Naive thymus-derived CD4-positive, alpha-beta T cell (primary cell): ENCODE measurements at regions of chr14 and their contacts with region 1.

Region 1: GRCh38 chr14:80850197-80850814 is 91.2 kb downstream of the CEP128 start:
- DNase-seq: peak in 4 of 9 donors; percentile 1 to 5 (median 4)
- ATAC-seq: no peak
- H3K4me3 ChIP-seq: no peak overlapping the region
- H3K4me3 Mint-ChIP-seq: no peak overlapping the region
- H3K27ac ChIP-seq: no peak overlapping the region
- H3K27ac Mint-ChIP-seq: no peak overlapping the region
- H3K4me1 ChIP-seq: no peaks in the 10 kb centered on the region
- H3K4me1 Mint-ChIP-seq: no peaks in the 10 kb centered on the region
- H3K27me3 ChIP-seq: no peaks in the 10 kb centered on the region
- H3K27me3 Mint-ChIP-seq: no peaks in the 10 kb centered on the region

Region 2: GRCh38 chr14:78959674-78960264 is 1890.5 kb before region 1 on chr14:
- CTCF ChIA-PET with region 1: no interaction called
- POLR2A ChIA-PET with region 1: no interaction called
- intact Hi-C with region 1: loop called (anchors 1 kb)
- DNase-seq: peak in 7 of 9 donors; percentile 2 to 26 (median 10)
- ATAC-seq: no peak
- H3K4me3 ChIP-seq: no peak overlapping the region
- H3K4me3 Mint-ChIP-seq: no peak overlapping the region
- H3K27ac ChIP-seq: no peak overlapping the region
- H3K27ac Mint-ChIP-seq: no peak overlapping the region
- H3K4me1 ChIP-seq: no peaks in the 10 kb centered on the region
- H3K4me1 Mint-ChIP-seq: no peaks in the 10 kb centered on the region
- H3K27me3 ChIP-seq: no peaks in the 10 kb centered on the region
- H3K27me3 Mint-ChIP-seq: peaks cover 0 to 17% (median 6%) of the 10 kb centered on the region in 5 donors

Region 3: GRCh38 chr14:79011091-79011919 is 1839.0 kb before region 1 on chr14:
- CTCF ChIA-PET with region 1: no interaction called
- POLR2A ChIA-PET with region 1: no interaction called
- intact Hi-C with region 1: loop called in 1 of 2 experiments (anchors 5 kb)
- DNase-seq: no peak
- ATAC-seq: no peak
- H3K4me3 ChIP-seq: no peak overlapping the region
- H3K4me3 Mint-ChIP-seq: no peak overlapping the region
- H3K27ac ChIP-seq: no peak overlapping the region
- H3K27ac Mint-ChIP-seq: no peak overlapping the region
- H3K4me1 ChIP-seq: no peaks in the 10 kb centered on the region
- H3K4me1 Mint-ChIP-seq: no peaks in the 10 kb centered on the region
- H3K27me3 ChIP-seq: no peaks in the 10 kb centered on the region
- H3K27me3 Mint-ChIP-seq: peaks cover 0 to 13% (median 0%) of the 10 kb centered on the region in 5 donors

Region 4: GRCh38 chr14:80055667-80056496 is 794.4 kb before region 1 on chr14:
- CTCF ChIA-PET with region 1: no interaction called
- POLR2A ChIA-PET with region 1: no interaction called
- intact Hi-C with region 1: loop called in 1 of 2 experiments (anchors 10 kb)
- DNase-seq: no peak
- ATAC-seq: no peak
- H3K4me3 ChIP-seq: no peak overlapping the region
- H3K4me3 Mint-ChIP-seq: no peak overlapping the region
- H3K27ac ChIP-seq: no peak overlapping the region
- H3K27ac Mint-ChIP-seq: no peak overlapping the region
- H3K4me1 ChIP-seq: no peaks in the 10 kb centered on the region
- H3K4me1 Mint-ChIP-seq: no peaks in the 10 kb centered on the region
- H3K27me3 ChIP-seq: no peaks in the 10 kb centered on the region
- H3K27me3 Mint-ChIP-seq: no peaks in the 10 kb centered on the region

Region 5: GRCh38 chr14:80213599-80213998 is 636.7 kb before region 1 on chr14:
- CTCF ChIA-PET with region 1: no interaction called
- POLR2A ChIA-PET with region 1: no interaction called
- intact Hi-C with region 1: loop called in 1 of 2 experiments (anchors 5 kb)
- DNase-seq: no peak
- ATAC-seq: no peak
- H3K4me3 ChIP-seq: no peak overlapping the region
- H3K4me3 Mint-ChIP-seq: no peak overlapping the region
- H3K27ac ChIP-seq: no peak overlapping the region
- H3K27ac Mint-ChIP-seq: no peak overlapping the region
- H3K4me1 ChIP-seq: no peaks in the 10 kb centered on the region
- H3K4me1 Mint-ChIP-seq: peaks cover 0 to 1% (median 0%) of the 10 kb centered on the region in 7 donors
- H3K27me3 ChIP-seq: no peaks in the 10 kb centered on the region
- H3K27me3 Mint-ChIP-seq: peaks cover 0 to 9% (median 0%) of the 10 kb centered on the region in 5 donors

Region 6: DNA sequence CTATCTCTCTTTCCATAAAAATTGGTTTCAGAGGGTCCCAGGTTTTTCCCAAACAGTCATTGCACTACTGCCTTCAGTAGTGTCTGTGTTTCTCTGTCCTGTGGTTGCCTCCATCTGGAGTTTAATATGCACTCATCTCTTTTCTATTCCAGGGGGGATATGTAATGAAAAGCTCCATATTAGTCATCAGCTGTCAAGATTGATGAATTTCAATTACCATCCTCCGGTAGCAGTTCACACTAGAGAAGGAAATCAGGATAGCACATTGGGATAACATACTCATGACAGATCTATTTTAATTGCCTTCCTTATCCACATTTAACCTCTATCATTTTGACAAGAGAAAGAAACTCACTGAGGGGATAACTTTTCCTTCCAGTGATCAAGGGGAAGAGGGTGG is 1272.3 kb after region 1 on chr14:
- CTCF ChIA-PET with region 1: no interaction called
- POLR2A ChIA-PET with region 1: no interaction called
- intact Hi-C with region 1: no loop called
- DNase-seq: no peak
- ATAC-seq: no peak
- H3K4me3 ChIP-seq: no peak overlapping the region
- H3K4me3 Mint-ChIP-seq: no peak overlapping the region
- H3K27ac ChIP-seq: no peak overlapping the region
- H3K27ac Mint-ChIP-seq: no peak overlapping the region
- H3K4me1 ChIP-seq: no peaks in the 10 kb centered on the region
- H3K4me1 Mint-ChIP-seq: no peaks in the 10 kb centered on the region
- H3K27me3 ChIP-seq: no peaks in the 10 kb centered on the region
- H3K27me3 Mint-ChIP-seq: no peaks in the 10 kb centered on the region